ENCODE measurements at regions of chr7 and their contacts with region 1.

Region 1: GRCh38 chr7:64307254-64308015 is 6.3 kb upstream of the ZNF736 start:
- DNase-seq: peak; percentile 91 to 100 (median 98)

Region 2: GRCh38 chr7:63927261-63927660 is 380.2 kb before region 1 on chr7:
- intact Hi-C with region 1: no loop called
- DNase-seq: no peak

Region 3: DNA sequence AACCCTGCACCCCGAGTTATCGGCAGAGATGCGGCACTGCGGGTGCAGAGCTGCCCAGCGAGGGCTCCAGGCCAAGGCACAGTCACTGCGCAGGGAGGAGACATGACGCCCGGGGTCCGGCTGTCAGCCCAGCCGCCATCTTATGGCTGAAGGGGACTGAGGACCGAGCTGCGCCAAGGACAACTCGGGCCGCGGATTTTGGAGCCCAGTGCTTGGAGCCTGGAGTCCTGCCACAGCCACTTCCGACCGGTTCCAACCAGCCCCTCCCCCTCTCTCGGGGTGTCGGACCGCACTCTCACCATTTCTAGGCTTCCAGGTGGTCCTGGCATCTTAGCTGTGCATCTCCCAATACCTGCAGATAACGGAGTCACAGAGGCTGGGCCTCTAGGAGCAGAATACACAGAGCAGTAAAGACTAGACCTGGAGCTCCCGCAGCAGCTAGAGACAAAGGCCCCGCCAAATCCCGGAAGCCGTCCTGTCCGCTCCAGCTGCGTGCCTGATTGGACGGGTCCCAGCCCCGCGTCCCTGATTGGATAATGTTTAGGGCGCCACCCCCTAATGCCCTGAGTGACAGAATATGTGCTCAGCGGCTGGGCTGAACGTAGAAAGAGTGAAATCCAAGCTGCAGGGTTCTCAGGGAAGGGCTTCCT is 255.3 kb after region 1 on chr7 and contains the start of gene ZNF680:
- intact Hi-C with region 1: loop called (anchors 5 kb)
- DNase-seq: peak; percentile 95 to 99 (median 97)

Region 4: GRCh38 chr7:64618785-64619456 is 311.5 kb after region 1 on chr7:
- intact Hi-C with region 1: no loop called
- DNase-seq: no peak

Region 5: GRCh38 chr7:64665980-64666662 is 358.7 kb after region 1 on chr7 and contains the start of gene ZNF107:
- intact Hi-C with region 1: loop called (anchors 5 kb)
- DNase-seq: peak; percentile 89 to 99 (median 96)

Region 6: GRCh38 chr7:64794171-64794844 is 486.9 kb after region 1 on chr7 and contains the start of gene ZNF138:
- intact Hi-C with region 1: loop called (anchors 10 kb)
- DNase-seq: peak; percentile 92 to 100 (median 97)